ENCODE measurements at regions of chr6 and their contacts with region 1.

Region 1: GRCh38 chr6:157184202-157185020 is 138.9 kb downstream of the TMEM242 start:
- DNase-seq: peak; percentile 84
- H3K4me3 ChIP-seq: peak overlapping the region in 1 of 2 experiments; percentile 39; a peak in 1 of 4 replicates
- H3K27ac ChIP-seq: no peak overlapping the region
- H3K4me1 ChIP-seq: peaks cover 0 to 29% of the 10 kb centered on the region in 2 experiments; a peak in 1 of 4 replicates
- H3K27me3 ChIP-seq: no peaks in the 10 kb centered on the region
- CTCF ChIP-seq: peak; percentile 90
- EP300 ChIP-seq: no peak
- RAD21 ChIP-seq: peak; percentile 93

Region 2: GRCh38 chr6:157045831-157046454 is 138.5 kb before region 1 on chr6:
- CTCF ChIA-PET with region 1: interaction called, 20 read pairs
- POLR2A ChIA-PET with region 1: no interaction called
- DNase-seq: peak; percentile 54
- H3K4me3 ChIP-seq: no peak overlapping the region
- H3K27ac ChIP-seq: peak overlapping the region; percentile 30 to 50; a peak in 3 of 4 replicates
- H3K4me1 ChIP-seq: peaks cover 11 to 16% of the 10 kb centered on the region in 2 experiments; a peak in 3 of 4 replicates
- H3K27me3 ChIP-seq: no peaks in the 10 kb centered on the region
- CTCF ChIP-seq: peak; percentile 73
- EP300 ChIP-seq: no peak
- RAD21 ChIP-seq: peak; percentile 66

Region 3: DNA sequence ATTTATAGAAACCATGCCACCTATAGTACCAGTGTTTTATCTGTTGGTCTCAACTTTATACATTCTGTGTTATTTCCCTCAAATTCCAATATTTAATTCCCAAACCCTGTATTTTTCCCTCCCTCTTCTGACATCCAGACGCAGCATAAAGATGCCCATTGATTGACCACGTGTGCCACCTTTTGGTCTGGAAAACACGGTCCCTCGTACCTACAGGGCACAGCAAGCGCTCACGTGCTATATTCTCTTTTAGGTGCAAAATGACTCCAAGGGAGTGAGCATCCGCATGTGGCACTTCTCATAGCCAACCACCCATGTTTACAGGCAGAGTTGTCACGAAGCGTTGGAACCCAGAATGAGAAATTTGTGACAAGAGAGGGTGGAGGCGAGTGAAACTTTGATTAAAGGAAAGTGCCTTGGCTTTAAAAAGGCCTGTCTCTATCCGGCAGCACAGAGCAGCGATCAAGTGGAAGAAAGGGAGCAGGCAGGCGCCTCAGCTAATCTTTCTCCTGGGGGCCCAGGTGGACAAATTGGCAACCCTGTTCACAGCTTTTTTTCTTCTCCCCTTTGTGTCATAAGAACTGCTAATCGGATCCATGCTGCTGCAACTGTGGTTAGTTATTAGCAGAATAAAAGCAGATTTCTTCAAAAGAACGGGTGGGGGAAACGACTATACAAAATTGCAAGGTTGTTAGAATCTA is 87.0 kb before region 1 on chr6:
- CTCF ChIA-PET with region 1: no interaction called
- POLR2A ChIA-PET with region 1: no interaction called
- DNase-seq: no peak
- H3K4me3 ChIP-seq: no peak overlapping the region
- H3K27ac ChIP-seq: no peak overlapping the region
- H3K4me1 ChIP-seq: peaks cover 0 to 3% of the 10 kb centered on the region in 2 experiments; a peak in 1 of 4 replicates
- H3K27me3 ChIP-seq: no peaks in the 10 kb centered on the region
- CTCF ChIP-seq: no peak
- EP300 ChIP-seq: no peak
- RAD21 ChIP-seq: no peak

Region 4: GRCh38 chr6:157143171-157143889 is 41.1 kb before region 1 on chr6:
- CTCF ChIA-PET with region 1: interaction called, 15 read pairs
- POLR2A ChIA-PET with region 1: no interaction called
- DNase-seq: peak; percentile 82
- H3K4me3 ChIP-seq: no peak overlapping the region
- H3K27ac ChIP-seq: peak overlapping the region; percentile 88 to 94
- H3K4me1 ChIP-seq: peaks cover 28 to 45% of the 10 kb centered on the region in 2 experiments
- H3K27me3 ChIP-seq: no peaks in the 10 kb centered on the region
- CTCF ChIP-seq: no peak
- EP300 ChIP-seq: peak; percentile 75 to 79; a peak in 3 of 4 replicates
- RAD21 ChIP-seq: no peak

Region 5: GRCh38 chr6:157198419-157199279 is 14.2 kb after region 1 on chr6:
- CTCF ChIA-PET with region 1: interaction called, 16 read pairs
- POLR2A ChIA-PET with region 1: no interaction called
- DNase-seq: peak; percentile 39
- H3K4me3 ChIP-seq: no peak overlapping the region
- H3K27ac ChIP-seq: no peak overlapping the region; a peak in 1 of 4 replicates
- H3K4me1 ChIP-seq: peaks cover 0 to 6% of the 10 kb centered on the region in 2 experiments; a peak in 2 of 4 replicates
- H3K27me3 ChIP-seq: no peaks in the 10 kb centered on the region
- CTCF ChIP-seq: no peak
- EP300 ChIP-seq: no peak
- RAD21 ChIP-seq: no peak

Region 6: GRCh38 chr6:157358287-157358686 is 173.9 kb after region 1 on chr6:
- CTCF ChIA-PET with region 1: no interaction called
- POLR2A ChIA-PET with region 1: no interaction called
- DNase-seq: no peak
- H3K4me3 ChIP-seq: no peak overlapping the region
- H3K27ac ChIP-seq: no peak overlapping the region
- H3K4me1 ChIP-seq: no peaks in the 10 kb centered on the region
- H3K27me3 ChIP-seq: no peaks in the 10 kb centered on the region
- CTCF ChIP-seq: no peak
- EP300 ChIP-seq: no peak
- RAD21 ChIP-seq: no peak